AG04449 (cell line): ENCODE measurements at regions of chr15 and their contacts with region 1.

Region 1: DNA sequence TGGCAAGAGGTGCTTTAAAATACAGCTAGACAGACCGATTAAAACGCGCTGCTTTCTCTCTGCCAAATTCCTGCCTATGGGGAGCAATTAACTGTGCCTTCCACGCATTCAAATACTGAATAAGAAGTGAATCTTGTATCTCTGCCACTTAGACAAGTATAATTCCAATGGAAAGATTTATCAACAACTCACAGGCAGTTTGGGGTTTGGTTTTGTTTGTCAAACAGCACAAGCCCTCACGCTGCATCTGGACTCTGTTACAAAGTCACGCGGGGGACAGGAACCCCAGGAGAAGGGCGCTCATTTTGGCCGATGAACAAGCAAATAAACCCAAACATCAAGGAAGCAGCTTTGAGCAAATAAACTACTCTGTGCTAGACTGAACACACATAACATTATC is 61.8 kb upstream of the TMCO5A start:
- DNase-seq: no peak
- H3K4me3 ChIP-seq: no peak overlapping the region
- CTCF ChIP-seq: no peak

Region 2: DNA sequence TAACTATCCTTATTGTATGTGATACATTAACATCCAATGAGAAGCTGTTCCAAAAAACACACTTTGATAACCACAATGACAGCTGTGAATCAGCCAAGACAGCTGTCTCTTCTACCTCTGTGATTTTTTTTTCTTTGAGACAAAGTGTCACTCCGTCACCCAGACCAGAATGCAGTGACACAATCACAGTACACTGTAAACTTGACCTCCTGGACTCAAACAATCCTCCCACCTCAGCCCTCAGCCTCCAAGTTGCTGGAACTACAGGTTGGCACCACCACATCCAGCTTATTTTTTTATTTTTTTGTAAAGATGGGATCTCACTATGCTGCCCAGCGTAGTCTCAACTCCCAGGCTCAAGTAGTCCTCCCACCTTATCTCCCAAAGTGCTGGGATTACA is 11.8 kb before region 1 on chr15:
- CTCF ChIA-PET with region 1: interaction called, 12 read pairs
- POLR2A ChIA-PET with region 1: no interaction called
- DNase-seq: no peak
- H3K4me3 ChIP-seq: no peak overlapping the region
- CTCF ChIP-seq: no peak

Region 3: GRCh38 chr15:38186507-38186906 is 313.8 kb after region 1 on chr15:
- CTCF ChIA-PET with region 1: no interaction called
- POLR2A ChIA-PET with region 1: no interaction called
- DNase-seq: no peak
- H3K4me3 ChIP-seq: no peak overlapping the region
- CTCF ChIP-seq: no peak